CD4-positive, alpha-beta T cell (primary cell): ENCODE measurements at regions of chr1 and their contacts with region 1.

Region 1: DNA sequence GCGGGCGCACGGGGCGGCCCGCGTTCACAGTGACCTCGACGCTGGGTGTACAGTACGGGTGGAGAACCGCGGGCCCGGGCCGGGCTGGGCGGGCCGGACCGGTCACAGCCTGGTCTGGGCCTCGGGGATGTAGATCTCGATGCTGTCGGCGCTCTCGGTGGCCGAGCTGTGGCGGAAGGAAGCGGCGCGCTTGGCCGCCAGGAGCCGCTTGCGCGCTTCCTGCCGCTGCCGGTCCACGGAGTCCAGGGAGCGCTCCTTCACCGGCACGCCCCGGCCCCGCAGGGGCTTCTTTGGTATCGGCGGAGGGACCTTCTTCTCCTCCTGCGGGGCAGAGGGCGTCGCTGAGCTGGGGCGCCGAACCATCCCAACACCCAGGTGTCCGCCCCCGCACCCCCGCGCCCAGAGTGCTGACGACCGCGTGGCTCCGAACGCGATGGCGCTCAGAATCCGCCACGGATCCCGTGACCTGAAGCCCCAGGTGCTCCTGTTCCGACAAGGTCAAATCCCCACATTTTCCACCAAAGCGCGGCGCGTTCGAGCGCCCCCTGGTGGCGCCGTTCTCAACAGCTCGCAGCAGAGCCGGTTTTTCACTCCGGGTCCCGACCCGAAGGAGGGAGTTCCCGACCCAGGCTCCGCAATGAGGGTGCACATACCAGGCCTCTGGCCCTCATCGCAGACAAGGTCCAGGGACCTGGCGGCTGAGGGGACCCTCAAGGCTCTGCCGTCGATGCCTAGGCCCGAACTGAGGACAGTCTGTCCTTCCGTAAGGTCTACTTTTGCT is 6.6 kb upstream of the SMIM12 start:
- DNase-seq: peak; percentile 81 to 98 (median 92)
- ATAC-seq: peak; percentile 85
- H3K4me3 ChIP-seq: peak overlapping the region; percentile 62
- H3K4me3 Mint-ChIP-seq: peak overlapping the region; percentile 89
- H3K27ac ChIP-seq: peak overlapping the region; percentile 55 to 73
- H3K27ac Mint-ChIP-seq: peak overlapping the region; percentile 82
- H3K4me1 ChIP-seq: peaks cover 54% of the 10 kb centered on the region
- H3K4me1 Mint-ChIP-seq: peaks cover 49% of the 10 kb centered on the region
- H3K27me3 ChIP-seq: peaks cover 0 to 4% of the 10 kb centered on the region in 2 experiments
- H3K27me3 Mint-ChIP-seq: no peaks in the 10 kb centered on the region
- CTCF ChIP-seq: peak; percentile 97

Region 2: GRCh38 chr1:34786521-34787325 is 79.4 kb before region 1 on chr1:
- CTCF ChIA-PET with region 1: interaction called, 6 read pairs
- POLR2A ChIA-PET with region 1: no interaction called
- intact Hi-C with region 1: loop called (anchors 1 to 2 kb)
- DNase-seq: peak; percentile 29 to 78 (median 48)
- ATAC-seq: peak; percentile 84
- H3K4me3 ChIP-seq: no peak overlapping the region
- H3K4me3 Mint-ChIP-seq: no peak overlapping the region
- H3K27ac ChIP-seq: no peak overlapping the region
- H3K27ac Mint-ChIP-seq: no peak overlapping the region
- H3K4me1 ChIP-seq: peaks cover 5% of the 10 kb centered on the region
- H3K4me1 Mint-ChIP-seq: peaks cover 5% of the 10 kb centered on the region
- H3K27me3 ChIP-seq: peaks cover 14 to 36% of the 10 kb centered on the region in 2 experiments
- H3K27me3 Mint-ChIP-seq: peaks cover 58% of the 10 kb centered on the region
- CTCF ChIP-seq: peak; percentile 73

Region 3: GRCh38 chr1:34984793-34985608 is 118.8 kb after region 1 on chr1 and contains the start of gene TMEM35B:
- CTCF ChIA-PET with region 1: interaction called, 8 read pairs
- POLR2A ChIA-PET with region 1: interaction called, 10 read pairs
- intact Hi-C with region 1: loop called in 1 of 2 experiments (anchors 5 kb)
- DNase-seq: peak; percentile 64 to 88 (median 78)
- ATAC-seq: peak; percentile 97
- H3K4me3 ChIP-seq: peak within 1 kb of the TSS; percentile 65
- H3K4me3 Mint-ChIP-seq: peak within 1 kb of the TSS; percentile 97
- H3K27ac ChIP-seq: peak within 1 kb of the TSS; percentile 76 to 77
- H3K27ac Mint-ChIP-seq: peak within 1 kb of the TSS; percentile 87
- H3K4me1 ChIP-seq: peaks cover 41% of the 10 kb centered on the region
- H3K4me1 Mint-ChIP-seq: peaks cover 39% of the 10 kb centered on the region
- H3K27me3 ChIP-seq: no peaks in the 10 kb centered on the region
- H3K27me3 Mint-ChIP-seq: no peaks in the 10 kb centered on the region
- CTCF ChIP-seq: peak; percentile 33
- total RNA-seq, gene TMEM35B: 0.85 to 2.3 TPM

Region 4: GRCh38 chr1:35763201-35763600 is 897.0 kb after region 1 on chr1:
- CTCF ChIA-PET with region 1: no interaction called
- POLR2A ChIA-PET with region 1: no interaction called
- intact Hi-C with region 1: loop called in 1 of 2 experiments (anchors 5 kb)
- DNase-seq: no peak
- ATAC-seq: no peak
- H3K4me3 ChIP-seq: no peak overlapping the region
- H3K4me3 Mint-ChIP-seq: no peak overlapping the region
- H3K27ac ChIP-seq: no peak overlapping the region
- H3K27ac Mint-ChIP-seq: no peak overlapping the region
- H3K4me1 ChIP-seq: no peaks in the 10 kb centered on the region
- H3K4me1 Mint-ChIP-seq: peaks cover 7% of the 10 kb centered on the region
- H3K27me3 ChIP-seq: no peaks in the 10 kb centered on the region
- H3K27me3 Mint-ChIP-seq: no peaks in the 10 kb centered on the region
- CTCF ChIP-seq: no peak